ENCODE measurements at regions of chr17 and their contacts with region 1.

Region 1: DNA sequence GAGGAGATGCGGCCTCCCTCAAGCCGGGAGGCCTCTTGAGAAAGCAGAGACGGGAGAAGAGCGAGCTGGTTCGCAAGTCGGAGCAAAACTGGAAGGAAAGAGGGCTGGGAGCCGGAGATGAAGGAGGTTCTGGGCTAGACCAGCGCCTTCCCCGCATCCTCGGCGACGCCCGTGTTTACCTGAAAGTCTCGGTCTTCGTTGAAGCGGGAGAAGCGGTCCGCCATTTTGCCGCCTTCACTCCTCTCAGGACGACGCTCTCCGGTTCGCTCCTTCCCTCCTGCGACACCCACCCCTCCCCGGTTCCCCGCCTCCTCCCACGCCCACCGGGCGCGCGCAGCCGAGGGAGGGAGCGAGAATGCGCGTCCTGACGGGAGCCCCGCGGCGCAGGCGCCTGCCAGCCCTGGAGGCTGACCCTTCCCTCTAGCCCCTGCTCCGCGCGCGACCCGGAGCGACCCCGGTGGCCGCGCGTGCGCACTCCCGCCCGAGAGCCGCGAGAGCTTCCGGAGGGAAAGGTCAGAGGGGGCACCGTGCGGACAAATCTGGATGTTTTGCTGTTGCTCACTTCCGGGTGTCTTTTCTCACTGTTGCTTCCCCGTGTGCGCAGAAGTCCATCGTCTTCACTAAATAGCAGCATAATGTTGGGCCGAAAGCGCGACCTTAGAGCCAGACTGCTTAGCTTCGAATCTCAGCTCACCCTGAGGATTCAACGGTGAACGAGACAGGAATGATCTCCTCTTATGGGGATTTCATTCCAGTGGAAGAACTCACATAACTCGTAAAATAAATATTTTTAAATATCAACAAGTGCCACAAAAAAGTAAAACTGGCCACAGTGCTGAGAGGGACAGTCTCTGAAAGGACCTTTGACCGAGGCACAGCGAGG is at the start of gene GPATCH8:
- DNase-seq: peak; percentile 99
- H3K4me3 Mint-ChIP-seq: peak within 1 kb of the TSS; percentile 94
- H3K27ac Mint-ChIP-seq: peak within 1 kb of the TSS; percentile 94
- H3K4me1 Mint-ChIP-seq: peaks cover 15% of the 10 kb centered on the region
- H3K27me3 Mint-ChIP-seq: peaks cover 3% of the 10 kb centered on the region
- total RNA-seq, gene GPATCH8: 43.6 and 46.4 TPM in 2 replicates

Region 2: GRCh38 chr17:44186307-44187130 is 316.9 kb before region 1 on chr17 and contains the start of gene TMUB2:
- intact Hi-C with region 1: loop called (anchors 5 kb)
- DNase-seq: peak; percentile 100
- H3K4me3 Mint-ChIP-seq: peak within 1 kb of the TSS; percentile 100
- H3K27ac Mint-ChIP-seq: peak within 1 kb of the TSS; percentile 99
- H3K4me1 Mint-ChIP-seq: peaks cover 33% of the 10 kb centered on the region
- H3K27me3 Mint-ChIP-seq: no peaks in the 10 kb centered on the region
- total RNA-seq, gene TMUB2: 16.1 and 19.0 TPM in 2 replicates

Region 3: GRCh38 chr17:44218344-44219107 is 284.9 kb before region 1 on chr17:
- intact Hi-C with region 1: loop called (anchors 10 kb)
- DNase-seq: peak; percentile 96
- H3K4me3 Mint-ChIP-seq: peak overlapping the region; percentile 97
- H3K27ac Mint-ChIP-seq: peak overlapping the region; percentile 97
- H3K4me1 Mint-ChIP-seq: peaks cover 52% of the 10 kb centered on the region
- H3K27me3 Mint-ChIP-seq: peaks cover 2% of the 10 kb centered on the region

Region 4: DNA sequence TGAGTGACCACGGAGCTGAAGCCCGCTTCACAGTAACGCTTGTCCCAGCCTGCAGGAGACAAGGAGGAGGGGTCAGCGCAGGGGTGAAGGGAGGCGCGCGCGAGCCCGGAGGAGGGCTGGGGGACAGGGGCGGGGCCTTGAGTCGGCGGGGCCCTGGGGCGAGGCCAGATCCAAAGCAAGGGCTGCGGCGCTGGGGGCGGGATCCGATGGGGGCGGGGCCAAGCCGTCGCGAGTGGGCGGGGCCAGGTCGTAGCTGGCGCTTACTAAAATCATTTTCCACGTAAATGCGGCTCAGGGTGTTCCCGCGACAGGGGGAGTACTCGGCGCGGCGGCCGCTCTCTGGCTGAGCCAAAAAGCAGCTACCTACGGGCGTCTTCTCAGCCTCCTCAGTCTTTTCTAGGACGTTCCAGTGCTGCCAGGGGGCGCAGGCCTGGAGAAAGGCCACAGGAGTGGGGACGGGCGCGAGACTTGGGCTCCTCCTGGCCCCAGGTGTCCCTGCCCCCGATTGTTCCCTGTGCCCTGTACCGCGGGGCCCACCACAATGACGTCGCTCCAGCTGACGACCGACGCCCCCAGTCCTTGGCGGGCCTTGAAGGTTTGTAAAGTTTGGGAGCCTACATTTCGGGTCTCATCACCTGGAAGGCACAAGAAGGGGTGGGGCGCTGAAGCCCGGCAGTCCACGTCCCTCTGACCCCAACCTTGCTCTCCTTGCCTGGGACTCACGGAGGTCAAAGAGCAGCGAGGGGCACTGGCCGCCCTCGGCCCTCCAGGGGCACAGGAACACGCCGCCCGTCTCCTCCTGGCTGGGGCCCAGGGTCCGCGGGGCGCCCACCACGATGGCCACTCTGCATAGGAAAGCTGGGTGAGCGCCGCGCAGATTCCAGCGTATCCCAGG is 117.9 kb before region 1 on chr17:
- intact Hi-C with region 1: loop called (anchors 10 kb)
- DNase-seq: peak; percentile 95
- H3K4me3 Mint-ChIP-seq: peak overlapping the region; percentile 76
- H3K27ac Mint-ChIP-seq: peak overlapping the region; percentile 38
- H3K4me1 Mint-ChIP-seq: peaks cover 13% of the 10 kb centered on the region
- H3K27me3 Mint-ChIP-seq: peaks cover 21% of the 10 kb centered on the region

Region 5: DNA sequence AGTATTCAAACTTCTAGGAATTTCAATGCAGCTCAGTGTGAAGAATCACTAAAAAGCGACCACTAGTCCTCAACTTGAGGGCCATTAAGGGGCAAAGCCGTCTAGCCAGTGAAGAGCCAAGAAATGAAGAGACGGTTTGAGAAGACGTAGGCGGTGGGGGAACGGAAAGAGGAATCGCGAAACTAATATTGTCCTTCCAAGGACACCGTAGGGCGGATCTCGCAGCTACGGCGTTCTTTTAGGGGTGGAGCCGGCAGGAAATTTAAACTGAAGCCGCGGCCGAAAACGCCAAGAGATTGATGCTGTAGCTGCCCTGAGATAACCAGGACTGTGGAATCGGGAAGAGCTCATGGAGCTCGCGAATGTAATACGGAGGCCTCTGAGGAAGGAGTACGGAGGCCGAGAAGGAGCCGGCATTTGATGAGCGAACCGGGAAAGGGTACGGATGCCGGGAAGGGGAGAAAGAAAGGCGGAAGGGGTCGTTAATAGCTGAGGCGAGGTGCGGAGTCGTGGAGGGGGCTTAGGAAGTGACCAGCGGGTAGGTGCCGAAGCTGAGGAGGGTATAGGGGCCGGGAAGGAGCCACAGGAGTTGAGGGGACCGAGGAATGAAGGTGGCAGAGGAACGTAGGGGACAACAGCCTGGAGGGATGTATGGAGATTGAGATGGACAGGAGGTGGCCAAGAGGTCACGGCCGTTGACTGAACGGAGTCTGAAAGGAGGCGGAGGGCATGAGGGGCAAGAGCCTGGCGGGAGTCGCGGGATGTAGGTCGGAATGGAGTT is 205.2 kb after region 1 on chr17 and contains the start of gene DBF4B:
- intact Hi-C with region 1: loop called (anchors 1 kb)
- DNase-seq: peak; percentile 96
- H3K4me3 Mint-ChIP-seq: no peak within 1 kb of the TSS
- H3K27ac Mint-ChIP-seq: peak within 1 kb of the TSS; percentile 17
- H3K4me1 Mint-ChIP-seq: peaks cover 5% of the 10 kb centered on the region
- H3K27me3 Mint-ChIP-seq: peaks cover 7% of the 10 kb centered on the region
- total RNA-seq, gene DBF4B: 25.2 and 25.7 TPM in 2 replicates